GM12878 (cell line): ENCODE measurements at regions of chr22 and their contacts with region 1.

Region 1: DNA sequence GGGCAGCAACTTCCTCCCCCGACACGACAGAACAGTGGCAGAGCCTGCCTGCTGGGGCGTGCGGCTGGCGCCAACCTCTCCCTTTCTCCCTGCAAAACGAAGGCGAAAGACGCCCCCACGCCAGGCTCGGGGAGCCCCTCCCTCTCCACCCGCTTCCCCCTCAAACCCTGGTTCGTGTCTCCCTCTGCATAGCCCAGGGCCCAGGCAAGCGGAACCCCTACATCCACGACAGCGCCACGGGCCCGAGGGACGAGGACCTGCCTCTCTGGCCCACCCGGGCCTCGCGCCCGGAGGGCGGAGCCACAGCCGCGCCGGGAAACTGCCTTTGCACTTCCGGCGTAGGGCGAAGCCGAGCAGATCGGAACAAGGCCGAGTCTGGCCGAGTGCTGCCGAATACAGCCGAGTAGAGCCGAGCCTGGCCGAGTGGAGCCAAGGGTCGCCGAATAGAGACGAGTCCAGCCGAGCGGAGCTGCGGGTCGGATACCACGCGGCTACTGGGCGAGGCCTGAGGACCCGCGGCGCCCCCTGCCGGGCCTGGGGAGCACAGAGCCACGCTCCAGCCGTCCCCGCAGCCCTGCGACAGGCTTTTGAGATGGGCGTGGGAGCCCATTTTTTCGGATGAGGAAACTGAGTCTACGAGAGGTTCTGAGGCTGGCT is 11.2 kb upstream of the C1QTNF6 start:
- DNase-seq: peak; percentile 98
- ATAC-seq: peak; percentile 94
- H3K4me3 ChIP-seq: peak overlapping the region; percentile 72
- H3K27ac ChIP-seq: peak overlapping the region; percentile 94
- H3K4me1 ChIP-seq: peaks cover 34% of the 10 kb centered on the region
- H3K27me3 ChIP-seq: no peaks in the 10 kb centered on the region
- CTCF ChIP-seq: peak; percentile 91 to 95 (median 93)
- EP300 ChIP-seq: no peak
- POLR2A ChIP-seq: peak; percentile 95
- RAD21 ChIP-seq: peak; percentile 69

Region 2: GRCh38 chr22:36781656-36782627 is 417.3 kb before region 1 on chr22:
- CTCF ChIA-PET with region 1: interaction called, 3 read pairs
- POLR2A ChIA-PET with region 1: no interaction called
- RAD21 ChIA-PET with region 1: no interaction called
- SMC1A ChIA-PET with region 1: no interaction called
- in situ Hi-C with region 1: no loop called
- intact Hi-C with region 1: loop called (anchors 10 kb)
- DNase-seq: peak; percentile 33
- ATAC-seq: peak; percentile 98
- H3K4me3 ChIP-seq: no peak overlapping the region
- H3K27ac ChIP-seq: no peak overlapping the region
- H3K4me1 ChIP-seq: peaks cover under 1% of the 10 kb centered on the region; the same call in 1 of the 2 replicates
- H3K27me3 ChIP-seq: peaks cover 0 to 5% of the 10 kb centered on the region in 2 experiments; a peak in 1 of 4 replicates
- CTCF ChIP-seq: peak; percentile 90 to 97 (median 95)
- EP300 ChIP-seq: no peak; a peak in 1 of 4 replicates
- POLR2A ChIP-seq: no peak
- RAD21 ChIP-seq: peak; percentile 84

Region 3: DNA sequence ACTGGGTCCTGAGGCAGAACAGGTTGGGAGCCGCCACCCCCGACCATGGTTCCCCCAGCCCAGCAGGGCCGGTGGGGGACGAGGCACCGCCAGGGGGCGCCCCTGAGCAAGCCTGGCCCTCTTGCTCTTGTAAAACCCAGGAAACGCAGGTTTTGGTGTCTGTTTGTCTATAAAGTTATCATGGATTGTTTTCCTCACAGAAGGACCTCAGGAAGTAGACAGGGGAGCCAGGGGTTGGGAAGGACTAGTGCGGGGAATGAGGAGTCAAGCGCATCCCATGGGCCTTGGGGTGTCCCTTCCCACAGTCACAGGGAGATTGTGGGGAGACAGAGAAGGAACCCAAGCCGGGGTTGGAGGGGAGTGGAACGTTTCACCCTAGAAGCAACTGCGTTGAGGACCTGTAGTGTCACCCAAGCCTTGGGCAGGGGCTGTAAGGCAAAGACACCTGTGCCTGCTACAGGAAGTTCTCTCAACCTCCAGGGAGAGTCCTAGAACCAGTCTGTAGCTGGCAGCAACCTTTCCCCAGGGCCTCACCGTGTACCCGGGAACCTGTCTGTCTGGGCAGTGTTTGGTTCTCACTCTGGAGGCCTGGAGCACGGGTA is 121.2 kb before region 1 on chr22:
- CTCF ChIA-PET with region 1: interaction called, 17 read pairs
- POLR2A ChIA-PET with region 1: no interaction called
- RAD21 ChIA-PET with region 1: interaction called, 10 read pairs
- SMC1A ChIA-PET with region 1: interaction called, 8 read pairs
- in situ Hi-C with region 1: no loop called
- intact Hi-C with region 1: loop called (anchors 1 kb)
- DNase-seq: no peak
- ATAC-seq: peak; percentile 91
- H3K4me3 ChIP-seq: no peak overlapping the region
- H3K27ac ChIP-seq: no peak overlapping the region
- H3K4me1 ChIP-seq: peaks cover 10% of the 10 kb centered on the region
- H3K27me3 ChIP-seq: peaks cover 0 to 3% of the 10 kb centered on the region in 2 experiments; a peak in 2 of 4 replicates
- CTCF ChIP-seq: peak; percentile 96 to 99 (median 98)
- EP300 ChIP-seq: no peak
- POLR2A ChIP-seq: no peak
- RAD21 ChIP-seq: peak; percentile 85

Region 4: GRCh38 chr22:37148742-37149665 is 50.2 kb before region 1 on chr22:
- CTCF ChIA-PET with region 1: interaction called, 30 read pairs
- POLR2A ChIA-PET with region 1: interaction called, 7 read pairs
- RAD21 ChIA-PET with region 1: interaction called, 23 read pairs
- SMC1A ChIA-PET with region 1: interaction called, 16 read pairs
- in situ Hi-C with region 1: no loop called
- intact Hi-C with region 1: loop called (anchors 10 kb)
- DNase-seq: no peak
- ATAC-seq: peak; percentile 24
- H3K4me3 ChIP-seq: peak overlapping the region; percentile 99
- H3K27ac ChIP-seq: peak overlapping the region; percentile 94
- H3K4me1 ChIP-seq: peaks cover 31% of the 10 kb centered on the region
- H3K27me3 ChIP-seq: no peaks in the 10 kb centered on the region
- CTCF ChIP-seq: no peak
- EP300 ChIP-seq: no peak
- POLR2A ChIP-seq: no peak
- RAD21 ChIP-seq: no peak

Region 5: DNA sequence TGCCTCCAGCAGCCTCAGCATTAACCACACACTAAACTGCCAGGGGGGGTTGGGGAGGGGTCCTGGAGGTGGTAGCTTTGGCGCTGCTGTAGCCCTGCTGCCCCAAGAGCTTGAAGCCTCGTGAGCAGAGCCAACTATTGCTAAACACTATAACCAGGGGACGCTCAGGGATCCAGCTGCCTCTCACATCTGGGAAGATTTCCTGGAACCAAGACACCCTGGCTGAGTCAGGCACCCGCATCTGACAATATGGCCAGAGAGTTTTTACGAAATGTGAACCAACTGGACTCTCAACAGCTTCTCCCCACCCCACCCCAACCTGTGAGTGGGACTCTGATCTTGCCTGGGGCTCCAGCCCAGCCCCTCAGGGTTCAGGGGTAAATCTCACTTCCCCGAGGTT is 25.5 kb before region 1 on chr22:
- CTCF ChIA-PET with region 1: interaction called, 53 read pairs
- POLR2A ChIA-PET with region 1: no interaction called
- RAD21 ChIA-PET with region 1: interaction called, 99 read pairs
- SMC1A ChIA-PET with region 1: interaction called, 5 read pairs
- in situ Hi-C with region 1: no loop called
- intact Hi-C with region 1: no loop called
- DNase-seq: no peak
- ATAC-seq: no peak
- H3K4me3 ChIP-seq: no peak overlapping the region
- H3K27ac ChIP-seq: no peak overlapping the region
- H3K4me1 ChIP-seq: peaks cover 4% of the 10 kb centered on the region; the same call in 1 of the 2 replicates
- H3K27me3 ChIP-seq: no peaks in the 10 kb centered on the region; a peak in 2 of 4 replicates
- CTCF ChIP-seq: no peak
- EP300 ChIP-seq: no peak
- POLR2A ChIP-seq: no peak
- RAD21 ChIP-seq: no peak

Region 6: DNA sequence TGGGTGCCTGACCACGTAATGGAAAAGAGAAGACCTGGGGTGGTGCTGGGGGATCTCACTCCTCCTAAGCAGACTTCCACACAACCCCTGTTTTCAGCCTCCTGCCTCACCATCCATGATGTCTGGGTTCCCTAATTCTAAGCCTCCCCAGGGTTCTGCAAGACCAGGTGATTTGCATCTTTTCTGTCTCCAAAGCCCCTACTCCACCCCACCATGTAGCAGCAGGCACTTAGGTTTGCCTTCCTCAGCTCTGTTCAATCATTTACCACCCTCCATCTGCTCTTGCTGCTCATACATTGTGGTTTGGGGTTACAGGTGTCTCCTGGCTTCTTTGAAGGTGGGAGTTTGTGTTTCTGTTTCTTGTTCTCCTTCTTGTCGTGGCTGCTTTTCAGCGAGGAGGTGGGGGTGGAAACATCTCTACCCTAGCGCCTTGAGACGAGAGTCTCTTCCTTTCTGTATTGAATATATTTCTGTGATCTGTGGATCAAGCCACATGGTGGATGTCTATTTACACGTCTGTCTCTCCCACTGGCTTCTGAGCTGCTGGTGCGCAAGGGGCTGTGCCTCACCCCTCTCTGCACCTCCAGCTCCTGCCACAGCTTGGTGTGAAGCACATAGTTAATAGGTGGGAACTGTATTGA is 19.7 kb after region 1 on chr22:
- CTCF ChIA-PET with region 1: interaction called, 111 read pairs
- POLR2A ChIA-PET with region 1: interaction called, 55 read pairs
- RAD21 ChIA-PET with region 1: interaction called, 38 read pairs
- SMC1A ChIA-PET with region 1: interaction called, 84 read pairs
- in situ Hi-C with region 1: no loop called
- intact Hi-C with region 1: loop called (anchors 1 kb)
- DNase-seq: peak; percentile 99
- ATAC-seq: peak; percentile 82
- H3K4me3 ChIP-seq: peak overlapping the region; percentile 80
- H3K27ac ChIP-seq: peak overlapping the region; percentile 99
- H3K4me1 ChIP-seq: peaks cover 73% of the 10 kb centered on the region
- H3K27me3 ChIP-seq: no peaks in the 10 kb centered on the region
- CTCF ChIP-seq: no peak
- EP300 ChIP-seq: peak; percentile 85 to 89
- POLR2A ChIP-seq: peak; percentile 62; the same call in 1 of the 2 replicates
- RAD21 ChIP-seq: no peak

Region 7: DNA sequence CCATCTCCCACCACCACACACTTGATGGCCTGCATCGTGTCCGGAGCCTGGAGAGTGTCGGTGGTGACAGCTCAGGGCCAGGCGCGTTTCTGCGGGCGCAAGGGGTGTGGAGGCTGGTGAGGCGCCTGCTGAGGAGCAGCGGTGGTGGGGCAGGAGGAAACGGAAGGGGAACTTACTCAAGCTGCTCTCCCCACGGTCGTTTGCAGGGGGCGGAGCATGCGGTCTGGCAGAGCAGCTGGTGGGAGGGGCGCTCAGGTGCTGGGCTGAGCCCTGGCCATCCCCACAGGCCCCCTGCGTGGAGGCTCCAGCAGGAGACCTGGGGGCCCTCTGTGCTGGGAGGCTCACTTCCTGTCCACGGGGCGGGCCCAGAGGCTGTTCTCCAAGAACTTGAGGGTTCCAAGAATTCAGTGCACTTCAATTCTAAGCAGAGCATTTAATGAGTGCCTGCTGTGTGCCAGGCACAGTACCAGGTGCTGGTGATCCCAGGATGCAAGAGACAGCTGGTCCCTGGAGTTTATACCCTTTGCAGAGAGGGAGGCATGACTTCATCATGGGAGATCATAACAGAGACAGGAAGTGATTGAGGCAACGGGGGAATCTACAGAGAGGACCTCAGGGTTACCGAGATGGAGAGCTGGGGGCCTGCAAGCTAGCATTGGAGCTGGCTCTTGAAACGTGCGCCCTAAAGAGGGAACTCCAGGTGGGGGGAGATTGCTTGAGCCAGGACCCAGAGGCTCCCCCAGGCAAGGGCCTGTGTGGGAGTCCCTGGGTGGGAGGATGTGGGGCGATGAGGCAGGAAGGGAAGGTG is 45.1 kb after region 1 on chr22 and contains the start of gene RAC2:
- CTCF ChIA-PET with region 1: interaction called, 40 read pairs
- POLR2A ChIA-PET with region 1: interaction called, 54 read pairs
- RAD21 ChIA-PET with region 1: interaction called, 104 read pairs
- SMC1A ChIA-PET with region 1: interaction called, 52 read pairs
- in situ Hi-C with region 1: no loop called
- intact Hi-C with region 1: no loop called
- DNase-seq: no peak
- ATAC-seq: peak; percentile 69
- H3K4me3 ChIP-seq: peak within 1 kb of the TSS; percentile 91
- H3K27ac ChIP-seq: peak within 1 kb of the TSS; percentile 96
- H3K4me1 ChIP-seq: peaks cover 49% of the 10 kb centered on the region
- H3K27me3 ChIP-seq: no peaks in the 10 kb centered on the region
- CTCF ChIP-seq: no peak
- EP300 ChIP-seq: 0 out of 4 replicates have a peak, but pooled peaks of 1 of the 2 experiments have one; percentile 37
- POLR2A ChIP-seq: peak; percentile 98
- RAD21 ChIP-seq: no peak
- polyA plus RNA-seq, gene RAC2: 102 to 108 TPM

Region 8: GRCh38 chr22:37290737-37291136 is 91.5 kb after region 1 on chr22:
- CTCF ChIA-PET with region 1: no interaction called
- POLR2A ChIA-PET with region 1: no interaction called
- RAD21 ChIA-PET with region 1: no interaction called
- SMC1A ChIA-PET with region 1: no interaction called
- in situ Hi-C with region 1: no loop called
- intact Hi-C with region 1: no loop called
- DNase-seq: no peak
- ATAC-seq: no peak
- H3K4me3 ChIP-seq: no peak overlapping the region
- H3K27ac ChIP-seq: no peak overlapping the region
- H3K4me1 ChIP-seq: peaks cover 5% of the 10 kb centered on the region
- H3K27me3 ChIP-seq: no peaks in the 10 kb centered on the region
- CTCF ChIP-seq: no peak
- EP300 ChIP-seq: no peak
- POLR2A ChIP-seq: no peak
- RAD21 ChIP-seq: no peak

Region 9: DNA sequence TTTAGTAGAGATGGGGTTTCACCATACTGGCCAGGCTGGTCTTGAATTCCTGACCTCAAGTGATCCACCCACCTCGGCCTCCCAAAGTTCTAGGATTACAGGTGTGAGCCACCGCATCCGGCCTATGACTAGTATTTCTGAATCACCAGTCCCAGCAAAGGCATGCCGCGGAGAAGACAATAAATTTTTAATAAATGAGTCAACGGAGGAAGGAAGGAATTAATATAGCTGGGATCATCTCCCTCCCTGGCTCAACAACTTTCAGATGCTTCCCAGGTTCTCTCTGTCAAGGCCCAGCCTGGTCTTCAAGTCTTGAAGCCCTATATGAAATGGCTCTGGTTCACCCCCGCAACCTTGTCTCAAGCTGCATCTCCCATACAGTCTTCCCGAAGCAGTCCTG is 128.8 kb after region 1 on chr22:
- CTCF ChIA-PET with region 1: no interaction called
- POLR2A ChIA-PET with region 1: no interaction called
- RAD21 ChIA-PET with region 1: no interaction called
- SMC1A ChIA-PET with region 1: no interaction called
- in situ Hi-C with region 1: no loop called
- intact Hi-C with region 1: no loop called
- DNase-seq: no peak
- ATAC-seq: no peak
- H3K4me3 ChIP-seq: no peak overlapping the region
- H3K27ac ChIP-seq: no peak overlapping the region
- H3K4me1 ChIP-seq: no peaks in the 10 kb centered on the region; the same call in 1 of the 2 replicates
- H3K27me3 ChIP-seq: peaks cover 7 to 9% of the 10 kb centered on the region in 2 experiments; a peak in 3 of 4 replicates
- CTCF ChIP-seq: no peak
- EP300 ChIP-seq: no peak
- POLR2A ChIP-seq: no peak
- RAD21 ChIP-seq: no peak

Region 10: DNA sequence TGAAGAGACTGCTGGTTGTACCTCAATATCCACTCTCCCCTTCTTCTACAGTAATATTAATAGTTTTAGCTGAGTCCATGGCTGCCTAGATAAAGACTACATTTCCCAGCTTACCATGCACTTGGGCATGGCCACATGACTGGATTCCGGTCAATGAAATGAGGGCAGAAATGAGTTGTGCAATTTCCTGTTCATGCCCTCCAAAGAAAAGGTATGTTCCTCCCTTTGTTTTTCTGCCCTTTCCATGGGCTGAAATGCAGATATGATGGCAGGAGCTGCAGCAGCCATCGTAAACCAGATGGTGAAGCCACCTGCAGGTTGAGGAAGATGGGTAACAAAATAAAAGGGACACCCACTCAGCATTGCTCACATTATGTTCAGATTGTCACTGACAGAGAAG is 243.3 kb after region 1 on chr22:
- CTCF ChIA-PET with region 1: no interaction called
- POLR2A ChIA-PET with region 1: no interaction called
- RAD21 ChIA-PET with region 1: no interaction called
- SMC1A ChIA-PET with region 1: no interaction called
- in situ Hi-C with region 1: no loop called
- intact Hi-C with region 1: no loop called
- DNase-seq: no peak
- ATAC-seq: peak; percentile 73
- H3K4me3 ChIP-seq: no peak overlapping the region
- H3K27ac ChIP-seq: no peak overlapping the region
- H3K4me1 ChIP-seq: no peaks in the 10 kb centered on the region
- H3K27me3 ChIP-seq: no peaks in the 10 kb centered on the region; a peak in 3 of 4 replicates
- CTCF ChIP-seq: no peak
- EP300 ChIP-seq: no peak
- POLR2A ChIP-seq: no peak
- RAD21 ChIP-seq: no peak